ENCODE measurements at regions of chr7 and their contacts with region 1.

Region 1: DNA sequence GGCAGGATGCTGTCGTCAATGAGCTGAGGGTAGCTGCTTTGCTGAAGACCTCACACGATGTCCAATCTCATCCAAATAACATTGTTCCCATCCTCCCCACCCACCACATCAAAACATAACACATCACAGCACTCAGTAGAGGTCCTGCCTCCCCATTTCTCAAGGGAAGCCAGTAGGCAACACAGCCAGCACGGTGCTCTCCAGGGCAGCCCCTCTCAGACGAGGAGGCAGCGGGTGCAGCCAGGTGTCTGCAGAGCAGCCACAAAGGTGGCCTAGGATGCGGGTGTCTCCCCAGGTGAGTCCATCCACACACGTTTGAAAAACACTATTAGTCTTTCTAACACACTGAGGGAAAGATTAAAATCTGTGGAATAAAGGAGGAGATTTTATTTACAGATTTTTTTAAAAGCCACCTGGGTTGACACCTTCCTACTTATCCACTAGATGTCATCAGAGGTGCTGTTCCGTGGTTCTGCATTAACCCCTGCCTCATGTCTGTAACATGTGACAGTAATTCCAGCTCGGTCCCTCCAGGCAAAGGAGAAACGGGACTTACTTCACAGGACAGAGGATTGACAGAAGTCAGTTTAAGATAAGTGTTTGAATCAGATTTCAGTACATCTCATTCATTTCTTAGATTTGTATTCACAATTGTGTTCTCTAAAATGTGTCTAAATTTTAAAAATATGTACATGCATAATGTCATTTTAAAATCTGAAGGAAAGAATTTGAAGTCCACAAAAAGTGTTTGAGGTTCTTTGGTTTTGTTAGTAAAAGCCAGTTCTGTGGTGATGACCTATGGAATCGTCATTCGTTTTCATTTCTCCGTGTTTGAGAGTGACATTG is 68.0 kb downstream of the LANCL2 start:
- DNase-seq: peak; percentile 83
- H3K4me3 ChIP-seq: no peak overlapping the region
- H3K27ac ChIP-seq: no peak overlapping the region
- H3K4me1 ChIP-seq: no peaks in the 10 kb centered on the region; a peak in 1 of 4 replicates
- H3K27me3 ChIP-seq: no peaks in the 10 kb centered on the region
- CTCF ChIP-seq: peak; percentile 67
- EP300 ChIP-seq: no peak
- RAD21 ChIP-seq: peak; percentile 96

Region 2: DNA sequence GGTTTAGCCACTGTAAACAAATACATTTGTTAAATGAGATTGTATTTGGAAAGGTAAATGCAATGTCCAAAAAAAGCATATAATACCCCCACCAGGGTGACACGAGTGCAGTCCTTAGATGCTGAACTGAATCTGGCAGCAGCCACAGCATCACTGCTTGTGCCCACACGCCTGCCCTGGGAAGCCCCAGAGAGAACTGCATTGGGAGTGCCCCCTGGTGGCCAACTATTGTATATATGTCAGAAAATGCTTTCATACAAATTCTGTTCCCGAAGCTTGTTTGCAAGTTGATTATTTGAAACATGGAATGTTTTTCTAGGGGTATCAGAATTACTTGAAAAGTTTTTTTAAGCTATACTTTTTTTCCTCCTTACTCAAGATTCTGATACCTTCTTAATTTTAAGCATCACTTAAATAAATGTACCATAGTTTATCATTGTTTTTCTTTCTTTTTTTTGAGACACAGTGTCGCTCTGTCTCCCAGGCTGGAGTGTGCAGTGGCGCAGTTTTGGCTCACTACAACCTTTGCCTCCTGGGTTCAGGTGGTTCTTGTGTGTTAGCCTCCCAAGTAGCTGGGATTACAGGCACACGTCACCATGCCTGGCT is 17.9 kb before region 1 on chr7:
- CTCF ChIA-PET with region 1: interaction called, 65 read pairs
- POLR2A ChIA-PET with region 1: no interaction called
- DNase-seq: peak; percentile 88
- H3K4me3 ChIP-seq: no peak overlapping the region
- H3K27ac ChIP-seq: no peak overlapping the region
- H3K4me1 ChIP-seq: peaks cover 0 to 5% of the 10 kb centered on the region in 2 experiments; a peak in 1 of 4 replicates
- H3K27me3 ChIP-seq: no peaks in the 10 kb centered on the region
- CTCF ChIP-seq: peak; percentile 96
- EP300 ChIP-seq: no peak
- RAD21 ChIP-seq: peak; percentile 84

Region 3: GRCh38 chr7:55508221-55509011 is 75.3 kb after region 1 on chr7:
- CTCF ChIA-PET with region 1: interaction called, 10 read pairs
- POLR2A ChIA-PET with region 1: no interaction called
- DNase-seq: no peak
- H3K4me3 ChIP-seq: no peak overlapping the region
- H3K27ac ChIP-seq: no peak overlapping the region
- H3K4me1 ChIP-seq: peaks cover 11 to 14% of the 10 kb centered on the region in 2 experiments; a peak in 2 of 4 replicates
- H3K27me3 ChIP-seq: no peaks in the 10 kb centered on the region
- CTCF ChIP-seq: no peak
- EP300 ChIP-seq: no peak
- RAD21 ChIP-seq: no peak

Region 4: GRCh38 chr7:55556031-55556430 is 122.9 kb after region 1 on chr7:
- CTCF ChIA-PET with region 1: interaction called, 10 read pairs
- POLR2A ChIA-PET with region 1: no interaction called
- DNase-seq: no peak
- H3K4me3 ChIP-seq: no peak overlapping the region
- H3K27ac ChIP-seq: peak overlapping the region in 1 of 2 experiments; percentile 12; a peak in 1 of 4 replicates
- H3K4me1 ChIP-seq: peaks cover 26 to 51% of the 10 kb centered on the region in 2 experiments
- H3K27me3 ChIP-seq: no peaks in the 10 kb centered on the region
- CTCF ChIP-seq: no peak
- EP300 ChIP-seq: no peak
- RAD21 ChIP-seq: no peak

Region 5: GRCh38 chr7:55572378-55573233 is 139.4 kb after region 1 on chr7 and contains the start of gene VOPP1:
- CTCF ChIA-PET with region 1: interaction called, 30 read pairs
- POLR2A ChIA-PET with region 1: no interaction called
- DNase-seq: peak; percentile 96
- H3K4me3 ChIP-seq: peak within 1 kb of the TSS; percentile 77 to 84
- H3K27ac ChIP-seq: peak within 1 kb of the TSS; percentile 81 to 91
- H3K4me1 ChIP-seq: peaks cover 33 to 45% of the 10 kb centered on the region in 2 experiments
- H3K27me3 ChIP-seq: no peaks in the 10 kb centered on the region
- CTCF ChIP-seq: no peak
- EP300 ChIP-seq: no peak
- RAD21 ChIP-seq: no peak
- polyA plus RNA-seq, gene VOPP1: 69.5 and 79.3 TPM in 2 replicates

Region 6: GRCh38 chr7:55593515-55594318 is 160.6 kb after region 1 on chr7:
- CTCF ChIA-PET with region 1: interaction called, 23 read pairs
- POLR2A ChIA-PET with region 1: no interaction called
- DNase-seq: peak; percentile 80
- H3K4me3 ChIP-seq: no peak overlapping the region; a peak in 1 of 4 replicates
- H3K27ac ChIP-seq: no peak overlapping the region
- H3K4me1 ChIP-seq: no peaks in the 10 kb centered on the region; a peak in 1 of 4 replicates
- H3K27me3 ChIP-seq: peaks cover 7% of the 10 kb centered on the region; the same call in 1 of the 2 replicates
- CTCF ChIP-seq: peak; percentile 97
- EP300 ChIP-seq: no peak
- RAD21 ChIP-seq: peak; percentile 75